ENCODE measurements at regions of chr19 and their contacts with region 1.

Region 1: GRCh38 chr19:29761575-29762232 is 46.6 kb upstream of the C19orf12 start:
- DNase-seq: no peak
- ATAC-seq: no peak
- H3K4me3 ChIP-seq: no peak overlapping the region
- H3K27ac ChIP-seq: no peak overlapping the region
- H3K4me1 ChIP-seq: no peaks in the 10 kb centered on the region
- H3K27me3 ChIP-seq: no peaks in the 10 kb centered on the region
- CTCF ChIP-seq: no peak
- EP300 ChIP-seq: no peak
- POLR2A ChIP-seq: no peak
- RAD21 ChIP-seq: no peak

Region 2: GRCh38 chr19:29724746-29725145 is 37.0 kb before region 1 on chr19:
- CTCF ChIA-PET with region 1: interaction called, 11 read pairs
- POLR2A ChIA-PET with region 1: no interaction called
- RAD21 ChIA-PET with region 1: no interaction called
- SMC1A ChIA-PET with region 1: no interaction called
- in situ Hi-C with region 1: no loop called
- intact Hi-C with region 1: no loop called
- DNase-seq: no peak
- ATAC-seq: no peak
- H3K4me3 ChIP-seq: no peak overlapping the region
- H3K27ac ChIP-seq: no peak overlapping the region
- H3K4me1 ChIP-seq: no peaks in the 10 kb centered on the region
- H3K27me3 ChIP-seq: peaks cover 0 to 2% of the 10 kb centered on the region in 2 experiments; a peak in 2 of 4 replicates
- CTCF ChIP-seq: no peak
- EP300 ChIP-seq: no peak
- POLR2A ChIP-seq: no peak
- RAD21 ChIP-seq: no peak

Region 3: DNA sequence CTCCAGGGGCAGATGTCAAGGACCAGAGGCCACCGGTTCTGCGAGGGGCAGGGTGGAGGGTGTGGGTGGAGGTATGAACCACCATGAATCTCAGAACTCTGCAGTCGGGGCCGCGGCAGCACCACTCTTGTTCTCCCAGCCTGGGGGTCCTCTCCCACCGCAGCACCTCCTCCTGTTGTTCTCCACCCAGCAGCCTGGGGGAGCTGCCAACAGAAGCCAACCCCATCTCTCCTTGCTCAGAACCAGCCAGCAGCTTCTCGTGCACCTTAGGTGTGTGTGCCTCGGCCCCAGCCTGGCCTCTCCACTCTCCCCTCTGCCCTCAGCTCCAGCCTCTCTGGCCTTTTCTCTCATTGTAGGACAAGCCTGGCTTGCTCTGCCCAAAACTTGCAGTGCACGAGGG is 18.2 kb after region 1 on chr19:
- CTCF ChIA-PET with region 1: interaction called, 11 read pairs
- POLR2A ChIA-PET with region 1: no interaction called
- RAD21 ChIA-PET with region 1: no interaction called
- SMC1A ChIA-PET with region 1: no interaction called
- in situ Hi-C with region 1: no loop called
- intact Hi-C with region 1: no loop called
- DNase-seq: no peak
- ATAC-seq: no peak; the same call in 2 of the 3 replicates
- H3K4me3 ChIP-seq: no peak overlapping the region
- H3K27ac ChIP-seq: no peak overlapping the region
- H3K4me1 ChIP-seq: no peaks in the 10 kb centered on the region
- H3K27me3 ChIP-seq: no peaks in the 10 kb centered on the region
- CTCF ChIP-seq: peak in 1 of 3 experiments; percentile 11; a peak in 1 of 6 replicates
- EP300 ChIP-seq: no peak
- POLR2A ChIP-seq: no peak
- RAD21 ChIP-seq: 0 out of 2 replicates have a peak, but pooled peaks have one; percentile 12

Region 4: GRCh38 chr19:29811125-29812079 is 49.7 kb after region 1 on chr19 and contains the start of gene CCNE1:
- CTCF ChIA-PET with region 1: interaction called, 3 read pairs
- POLR2A ChIA-PET with region 1: no interaction called
- RAD21 ChIA-PET with region 1: no interaction called
- SMC1A ChIA-PET with region 1: no interaction called
- in situ Hi-C with region 1: no loop called
- intact Hi-C with region 1: loop called (anchors 5 kb)
- DNase-seq: no peak
- ATAC-seq: peak; percentile 86
- H3K4me3 ChIP-seq: peak within 1 kb of the TSS; percentile 99
- H3K27ac ChIP-seq: peak within 1 kb of the TSS; percentile 75
- H3K4me1 ChIP-seq: peaks cover 16% of the 10 kb centered on the region
- H3K27me3 ChIP-seq: no peaks in the 10 kb centered on the region
- CTCF ChIP-seq: no peak
- EP300 ChIP-seq: no peak
- POLR2A ChIP-seq: peak; percentile 81
- RAD21 ChIP-seq: no peak
- polyA plus RNA-seq, gene CCNE1: 9.3 to 17.0 TPM

Region 5: DNA sequence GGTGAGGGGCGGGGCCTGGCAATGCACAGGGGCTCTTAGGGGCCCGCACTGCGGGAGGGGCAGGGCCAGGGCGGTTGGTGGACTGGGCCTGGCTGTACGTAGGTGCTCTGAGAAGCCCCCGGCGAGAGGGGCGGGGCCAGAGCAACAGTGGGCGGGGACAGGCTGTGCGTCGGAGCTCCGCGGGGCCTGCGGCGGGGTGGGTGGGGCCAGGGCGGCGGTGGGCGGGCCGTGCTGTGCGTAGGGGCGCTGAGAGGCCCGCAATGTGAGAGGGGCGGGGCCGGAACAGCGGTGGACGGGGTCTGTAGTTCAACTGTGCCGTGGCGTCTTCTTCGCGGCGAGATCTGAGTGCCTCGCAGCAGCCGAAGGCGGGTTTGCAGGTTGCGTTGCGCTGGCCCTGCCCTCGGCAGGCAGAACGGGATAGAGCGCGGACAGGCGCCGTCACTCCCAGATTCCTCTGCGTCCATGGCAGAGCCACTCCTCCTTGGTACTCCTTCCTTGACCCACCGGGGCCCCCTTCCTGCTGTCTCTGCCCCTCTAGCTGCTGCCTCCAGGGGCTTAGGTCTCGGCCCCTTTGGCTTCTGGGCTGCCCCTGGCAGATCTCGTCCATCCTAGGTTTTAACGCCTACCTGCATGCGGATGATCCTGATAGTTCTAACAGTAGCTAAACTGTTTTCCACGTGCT is 83.3 kb after region 1 on chr19:
- CTCF ChIA-PET with region 1: interaction called, 11 read pairs
- POLR2A ChIA-PET with region 1: no interaction called
- RAD21 ChIA-PET with region 1: interaction called, 10 read pairs
- SMC1A ChIA-PET with region 1: no interaction called
- in situ Hi-C with region 1: no loop called
- intact Hi-C with region 1: no loop called
- DNase-seq: peak; percentile 59
- ATAC-seq: peak; percentile 93
- H3K4me3 ChIP-seq: peak overlapping the region; percentile 90
- H3K27ac ChIP-seq: peak overlapping the region; percentile 59
- H3K4me1 ChIP-seq: peaks cover 21% of the 10 kb centered on the region
- H3K27me3 ChIP-seq: no peaks in the 10 kb centered on the region; a peak in 1 of 4 replicates
- CTCF ChIP-seq: peak in 1 of 3 experiments; percentile 5; a peak in 1 of 6 replicates
- EP300 ChIP-seq: no peak
- POLR2A ChIP-seq: peak; percentile 90
- RAD21 ChIP-seq: no peak

Region 6: DNA sequence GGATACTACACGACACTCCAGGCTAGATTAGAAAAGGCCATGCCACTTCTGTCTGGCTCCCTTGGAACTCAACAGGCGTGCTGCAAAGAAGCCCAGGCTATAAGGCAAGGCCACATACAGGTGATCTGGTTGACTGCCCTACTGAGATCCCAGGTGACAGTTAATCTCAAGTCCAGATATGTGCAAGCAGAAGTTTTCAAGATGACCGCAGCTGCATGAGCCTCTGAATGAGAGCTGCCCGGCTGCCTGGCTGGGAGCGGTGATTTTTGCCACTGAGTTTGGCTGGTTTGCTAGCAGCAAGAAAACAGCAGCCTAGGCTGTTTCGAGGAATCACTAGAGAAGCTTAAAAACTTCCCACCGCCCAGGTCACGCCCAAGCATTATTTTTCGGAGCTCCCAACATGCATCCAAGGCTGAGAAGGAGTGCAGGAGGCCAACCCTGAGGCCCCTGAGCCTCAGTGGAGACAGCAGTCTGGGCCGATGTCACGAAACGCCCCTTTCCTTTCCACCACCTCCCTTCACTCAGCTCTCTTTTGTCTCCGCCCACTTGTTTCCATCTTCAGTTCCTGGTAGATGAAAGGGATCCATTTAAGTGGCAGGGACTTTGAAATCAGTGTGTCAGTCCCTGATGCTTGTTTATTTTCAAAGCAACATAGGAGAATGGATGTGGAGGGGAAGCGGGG is 166.4 kb after region 1 on chr19:
- CTCF ChIA-PET with region 1: no interaction called
- POLR2A ChIA-PET with region 1: no interaction called
- RAD21 ChIA-PET with region 1: no interaction called
- SMC1A ChIA-PET with region 1: no interaction called
- in situ Hi-C with region 1: no loop called
- intact Hi-C with region 1: no loop called
- DNase-seq: peak; percentile 46
- ATAC-seq: peak; percentile 90
- H3K4me3 ChIP-seq: peak overlapping the region; percentile 41; the same call in 1 of the 2 replicates
- H3K27ac ChIP-seq: peak overlapping the region; percentile 63
- H3K4me1 ChIP-seq: peaks cover 12% of the 10 kb centered on the region
- H3K27me3 ChIP-seq: no peaks in the 10 kb centered on the region
- CTCF ChIP-seq: no peak
- EP300 ChIP-seq: no peak; a peak in 1 of 4 replicates
- POLR2A ChIP-seq: no peak
- RAD21 ChIP-seq: no peak

Measured in GM12878 (cell line).